Mammary epithelial cell (primary cell): ENCODE measurements at regions of chr3 and their contacts with region 1.

Region 1: GRCh38 chr3:136075218-136075808 is 109.8 kb downstream of the PPP2R3A start:
- DNase-seq: peak; percentile 53
- H3K4me3 ChIP-seq: no peak overlapping the region
- H3K27ac ChIP-seq: no peak overlapping the region
- H3K4me1 ChIP-seq: peaks cover 16% of the 10 kb centered on the region
- H3K27me3 ChIP-seq: no peaks in the 10 kb centered on the region
- CTCF ChIP-seq: peak; percentile 90 to 96

Region 2: DNA sequence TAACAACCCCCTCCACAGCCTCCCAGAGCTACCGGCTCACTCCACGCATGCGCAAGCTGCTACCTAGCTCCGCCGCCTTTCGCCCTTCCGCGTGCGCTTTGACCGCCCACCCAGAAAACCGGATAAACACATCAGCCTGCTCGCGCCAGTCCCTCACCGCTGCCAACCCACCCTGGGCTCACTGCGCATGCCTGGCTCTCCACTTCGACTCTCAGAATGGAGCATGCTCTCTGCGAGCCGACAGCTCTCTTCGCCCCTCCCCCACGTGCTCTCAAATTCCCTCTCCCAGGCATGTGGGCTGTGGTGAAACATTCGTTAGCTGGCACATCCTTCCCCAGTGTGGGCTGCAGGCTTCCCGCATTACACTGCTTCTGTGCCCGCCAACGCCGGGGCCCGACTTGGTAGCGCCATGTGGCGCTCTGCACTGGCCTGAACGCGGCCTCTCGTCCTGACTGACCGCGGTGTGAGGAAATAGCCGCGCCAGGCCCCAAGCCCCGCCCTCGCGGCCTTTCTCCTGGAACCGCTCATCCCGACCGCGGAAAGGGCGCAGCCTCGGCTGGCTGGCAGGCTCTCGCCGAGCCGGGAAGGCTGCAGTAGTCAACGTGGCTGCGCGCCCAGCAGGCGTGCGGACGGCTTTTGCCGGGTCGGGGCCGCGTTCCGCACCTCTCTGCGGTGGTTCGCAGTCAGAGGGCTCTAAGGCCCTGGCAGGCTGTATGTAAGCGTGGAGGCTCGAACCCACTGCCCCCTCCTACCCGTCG is 121.3 kb after region 1 on chr3:
- CTCF ChIA-PET with region 1: no interaction called
- dilution Hi-C with region 1: no loop called
- in situ Hi-C with region 1: loop called in 1 of 2 experiments (anchors 10 kb)
- intact Hi-C with region 1: loop called (anchors 1 kb)
- DNase-seq: peak; percentile 100
- H3K4me3 ChIP-seq: peak overlapping the region; percentile 39 to 93 (median 92)
- H3K27ac ChIP-seq: peak overlapping the region; percentile 76
- H3K4me1 ChIP-seq: peaks cover 13% of the 10 kb centered on the region
- H3K27me3 ChIP-seq: no peaks in the 10 kb centered on the region
- CTCF ChIP-seq: no peak

Region 3: GRCh38 chr3:136326316-136326715 is 251.0 kb after region 1 on chr3:
- CTCF ChIA-PET with region 1: no interaction called
- dilution Hi-C with region 1: no loop called
- in situ Hi-C with region 1: no loop called
- intact Hi-C with region 1: loop called (anchors 5 kb)
- DNase-seq: no peak
- H3K4me3 ChIP-seq: no peak overlapping the region
- H3K27ac ChIP-seq: no peak overlapping the region
- H3K4me1 ChIP-seq: no peaks in the 10 kb centered on the region
- H3K27me3 ChIP-seq: no peaks in the 10 kb centered on the region
- CTCF ChIP-seq: no peak

Region 4: DNA sequence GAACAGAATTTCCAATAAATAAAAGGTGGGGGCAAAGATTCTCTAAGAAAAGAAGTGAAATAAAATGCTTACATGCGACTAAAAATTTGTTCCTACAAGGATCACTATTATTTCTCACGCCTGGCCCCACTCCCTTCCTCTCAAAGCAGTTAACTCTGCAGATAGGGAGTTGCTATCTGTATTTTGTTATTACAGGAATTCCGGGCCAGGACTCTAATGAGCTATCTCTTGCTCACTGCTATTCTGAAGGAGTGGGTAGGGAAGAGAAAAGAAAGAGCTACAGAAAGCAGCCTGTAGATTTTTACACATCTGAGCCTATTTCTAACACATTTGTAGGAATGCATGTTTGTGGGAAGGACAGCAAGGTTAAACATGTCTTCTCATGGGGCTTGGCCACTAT is 315.3 kb after region 1 on chr3:
- CTCF ChIA-PET with region 1: no interaction called
- dilution Hi-C with region 1: no loop called
- in situ Hi-C with region 1: no loop called
- intact Hi-C with region 1: loop called (anchors 1 kb)
- DNase-seq: no peak
- H3K4me3 ChIP-seq: no peak overlapping the region
- H3K27ac ChIP-seq: no peak overlapping the region
- H3K4me1 ChIP-seq: no peaks in the 10 kb centered on the region
- H3K27me3 ChIP-seq: no peaks in the 10 kb centered on the region
- CTCF ChIP-seq: no peak

Region 5: GRCh38 chr3:136949708-136950107 is 874.4 kb after region 1 on chr3:
- CTCF ChIA-PET with region 1: no interaction called
- dilution Hi-C with region 1: no loop called
- in situ Hi-C with region 1: no loop called
- intact Hi-C with region 1: loop called (anchors 5 kb)
- DNase-seq: no peak
- H3K4me3 ChIP-seq: no peak overlapping the region
- H3K27ac ChIP-seq: no peak overlapping the region
- H3K4me1 ChIP-seq: peaks cover 27% of the 10 kb centered on the region
- H3K27me3 ChIP-seq: no peaks in the 10 kb centered on the region
- CTCF ChIP-seq: peak; percentile 17 to 47